AG04449 (cell line): ENCODE measurements at regions of chr3 and their contacts with region 1.

Region 1: GRCh38 chr3:129627429-129628168 is 21.1 kb upstream of the PLXND1 start:
- DNase-seq: no peak
- H3K4me3 ChIP-seq: peak overlapping the region; percentile 50
- CTCF ChIP-seq: peak; percentile 75

Region 2: DNA sequence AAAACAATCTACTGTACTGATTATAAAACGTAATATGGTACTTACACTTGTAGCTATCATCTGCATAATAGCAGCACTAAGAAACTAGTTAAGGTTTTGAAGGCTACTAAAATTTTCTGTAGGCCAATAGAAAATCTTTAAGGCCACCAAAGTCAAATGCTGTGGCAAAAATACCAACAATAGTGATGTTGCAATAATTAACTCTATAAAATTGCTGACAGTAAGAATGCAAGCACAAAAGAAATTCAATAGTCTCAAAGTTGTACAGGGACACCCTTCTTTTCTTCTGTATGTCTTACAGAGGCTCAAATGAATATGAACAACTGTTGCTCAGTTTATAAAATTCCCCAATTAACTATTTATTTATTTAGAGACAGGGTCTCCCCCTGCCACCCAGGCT is 203.9 kb after region 1 on chr3:
- CTCF ChIA-PET with region 1: interaction called, 41 read pairs
- POLR2A ChIA-PET with region 1: no interaction called
- DNase-seq: no peak
- H3K4me3 ChIP-seq: no peak overlapping the region
- CTCF ChIP-seq: no peak